K562 (cell line): ENCODE measurements at regions of chr2 and their contacts with region 1.

Region 1: GRCh38 chr2:65366595-65367125 is 65.7 kb downstream of the SPRED2 start:
- DNase-seq: peak; percentile 61 to 86 (median 73)
- ATAC-seq: peak; percentile 83
- H3K4me3 ChIP-seq: peak overlapping the region; percentile 2; the same call in 1 of the 2 replicates
- H3K27ac ChIP-seq: peak overlapping the region; percentile 75
- H3K4me1 ChIP-seq: peaks cover 12 to 64% of the 10 kb centered on the region in 2 experiments
- H3K27me3 ChIP-seq: no peaks in the 10 kb centered on the region
- CTCF ChIP-seq: no peak
- EP300 ChIP-seq: peak; percentile 63; the same call in 1 of the 2 replicates
- POLR2A ChIP-seq: no peak
- RAD21 ChIP-seq: no peak

Region 2: DNA sequence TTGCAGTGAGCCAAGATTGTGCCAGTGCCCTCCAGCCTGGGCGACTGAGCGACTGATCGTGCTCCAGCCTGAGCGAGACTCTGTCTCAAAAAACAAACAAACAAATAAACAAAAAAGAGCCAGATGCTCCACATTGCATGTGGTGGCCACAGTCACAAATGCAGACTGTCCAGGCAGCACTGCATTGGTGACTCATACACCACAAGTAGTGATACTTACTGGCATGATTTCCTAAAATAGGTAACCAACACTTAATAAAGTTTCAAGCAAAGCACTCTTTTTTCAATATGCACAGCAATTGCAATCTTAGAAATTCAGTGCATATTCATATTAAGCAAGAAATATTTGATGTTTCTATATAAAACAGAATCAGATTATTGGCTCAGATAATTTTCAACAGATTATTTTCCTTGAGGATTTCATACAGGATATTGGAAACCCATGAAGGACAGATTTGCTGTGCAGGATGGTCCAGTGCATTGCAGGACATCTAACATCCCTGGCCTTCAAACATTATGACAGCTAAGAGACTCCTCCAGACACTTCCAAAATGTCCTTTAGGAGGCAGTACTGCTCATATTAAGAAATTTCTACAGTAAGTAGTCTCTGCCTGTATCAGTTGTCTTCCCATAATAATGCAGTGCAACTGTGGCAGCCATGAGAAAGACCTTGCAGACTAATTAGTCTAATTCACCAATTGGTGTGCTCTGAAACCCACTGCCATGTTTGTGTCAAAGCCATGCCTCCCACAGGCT is 388.0 kb before region 1 on chr2:
- CTCF ChIA-PET with region 1: no interaction called
- POLR2A ChIA-PET with region 1: no interaction called
- in situ Hi-C with region 1: no loop called
- intact Hi-C with region 1: no loop called
- DNase-seq: peak in 3 of 4 experiments; percentile 22 to 41 (median 23)
- ATAC-seq: peak; percentile 94
- H3K4me3 ChIP-seq: no peak overlapping the region
- H3K27ac ChIP-seq: no peak overlapping the region
- H3K4me1 ChIP-seq: peaks cover 0 to 3% of the 10 kb centered on the region in 2 experiments; a peak in 2 of 5 replicates
- H3K27me3 ChIP-seq: peaks cover 0 to 4% of the 10 kb centered on the region in 2 experiments; a peak in 1 of 5 replicates
- CTCF ChIP-seq: peak; percentile 54 to 68 (median 58)
- EP300 ChIP-seq: no peak
- POLR2A ChIP-seq: no peak
- RAD21 ChIP-seq: peak; percentile 47 to 65

Region 3: DNA sequence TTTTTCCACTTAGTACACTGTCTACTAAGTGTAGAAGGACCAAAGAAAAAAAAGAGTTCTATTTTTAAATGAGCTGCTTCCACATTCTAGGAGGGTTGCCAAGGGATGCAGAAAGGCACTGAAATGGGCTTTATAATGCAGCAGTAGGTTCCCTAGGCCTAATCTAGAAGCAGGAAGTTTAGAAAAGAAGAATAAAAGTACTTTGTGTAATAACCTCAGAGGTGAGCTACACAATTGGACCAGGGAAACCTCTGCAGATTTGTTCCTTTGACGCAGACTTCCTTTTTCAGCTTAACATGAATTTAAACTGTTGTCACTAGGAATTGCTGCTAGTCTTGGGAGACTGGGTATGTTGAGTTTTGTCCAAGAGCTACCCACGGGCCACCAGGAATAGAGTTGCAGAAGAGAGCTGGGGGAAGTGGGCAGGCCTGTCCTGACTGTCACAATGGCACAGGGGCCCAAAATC is 202.2 kb before region 1 on chr2:
- CTCF ChIA-PET with region 1: no interaction called
- POLR2A ChIA-PET with region 1: no interaction called
- in situ Hi-C with region 1: no loop called
- intact Hi-C with region 1: no loop called
- DNase-seq: no peak
- ATAC-seq: no peak; the same call in 2 of the 3 replicates
- H3K4me3 ChIP-seq: no peak overlapping the region
- H3K27ac ChIP-seq: no peak overlapping the region
- H3K4me1 ChIP-seq: peaks cover 0 to 3% of the 10 kb centered on the region in 2 experiments; a peak in 1 of 5 replicates
- H3K27me3 ChIP-seq: no peaks in the 10 kb centered on the region
- CTCF ChIP-seq: no peak
- EP300 ChIP-seq: no peak
- POLR2A ChIP-seq: no peak
- RAD21 ChIP-seq: no peak

Region 4: GRCh38 chr2:65351234-65351947 is 15.3 kb before region 1 on chr2:
- CTCF ChIA-PET with region 1: no interaction called
- POLR2A ChIA-PET with region 1: interaction called, 12 read pairs
- in situ Hi-C with region 1: no loop called
- intact Hi-C with region 1: no loop called
- DNase-seq: peak; percentile 46 to 68 (median 60)
- ATAC-seq: peak; percentile 28
- H3K4me3 ChIP-seq: no peak overlapping the region
- H3K27ac ChIP-seq: peak overlapping the region; percentile 66; the same call in 2 of the 3 replicates
- H3K4me1 ChIP-seq: peaks cover 21 to 33% of the 10 kb centered on the region in 2 experiments
- H3K27me3 ChIP-seq: no peaks in the 10 kb centered on the region
- CTCF ChIP-seq: 0 out of 6 replicates have a peak, but pooled peaks of 1 of the 3 experiments have one; percentile 5
- EP300 ChIP-seq: peak; percentile 77
- POLR2A ChIP-seq: no peak
- RAD21 ChIP-seq: no peak

Region 5: GRCh38 chr2:65553504-65554074 is 186.9 kb after region 1 on chr2:
- CTCF ChIA-PET with region 1: no interaction called
- POLR2A ChIA-PET with region 1: no interaction called
- in situ Hi-C with region 1: no loop called
- intact Hi-C with region 1: no loop called
- DNase-seq: no peak
- ATAC-seq: no peak
- H3K4me3 ChIP-seq: no peak overlapping the region
- H3K27ac ChIP-seq: no peak overlapping the region
- H3K4me1 ChIP-seq: peaks cover 11 to 14% of the 10 kb centered on the region in 2 experiments; a peak in 4 of 5 replicates
- H3K27me3 ChIP-seq: no peaks in the 10 kb centered on the region
- CTCF ChIP-seq: no peak
- EP300 ChIP-seq: no peak
- POLR2A ChIP-seq: no peak
- RAD21 ChIP-seq: no peak